Mammary epithelial cell (primary cell): ENCODE measurements at regions of chr6 and their contacts with region 1.

Region 1: DNA sequence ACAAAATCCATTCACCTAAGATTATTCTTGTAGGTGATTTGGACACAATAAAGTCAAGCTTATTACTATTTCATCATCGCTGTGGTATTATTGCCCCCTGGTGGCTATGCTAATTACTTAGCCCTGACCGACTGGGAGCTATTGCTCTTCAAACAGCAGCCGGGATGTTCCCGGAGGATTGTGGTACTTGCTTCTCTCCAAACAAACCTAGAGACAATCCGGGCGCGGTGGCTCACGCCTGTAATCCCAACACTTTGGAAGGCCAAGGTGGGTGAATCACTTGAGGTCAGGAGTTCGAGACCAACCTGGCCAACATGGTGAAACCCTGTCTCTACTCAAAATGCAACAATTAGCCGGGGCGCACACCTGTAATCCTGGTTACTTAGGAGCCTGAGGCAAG is 15.4 kb upstream of the STMND1 start:
- DNase-seq: peak; percentile 59
- H3K4me3 ChIP-seq: no peak overlapping the region
- H3K27ac ChIP-seq: no peak overlapping the region
- H3K4me1 ChIP-seq: no peaks in the 10 kb centered on the region
- H3K27me3 ChIP-seq: peaks cover 4% of the 10 kb centered on the region
- CTCF ChIP-seq: peak; percentile 54 to 71

Region 2: DNA sequence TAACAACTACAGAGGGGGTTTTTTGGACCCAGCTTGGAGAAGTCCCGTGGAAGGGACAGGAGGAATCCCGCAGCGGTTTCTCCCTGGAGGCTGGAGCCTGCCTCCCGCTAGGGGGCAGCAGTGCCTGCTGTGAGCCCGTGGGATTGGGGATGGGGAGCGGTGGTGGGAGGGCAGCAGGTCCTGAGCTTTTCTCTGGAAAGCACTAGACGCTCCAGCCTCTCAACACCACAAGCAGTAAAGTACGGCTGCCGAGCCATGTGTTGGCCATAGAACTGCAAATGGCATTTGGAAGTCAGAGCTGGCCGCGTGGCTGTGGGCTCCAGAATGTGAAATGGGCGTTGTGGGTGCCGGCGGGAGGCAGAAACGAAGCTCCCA is 800.3 kb before region 1 on chr6:
- CTCF ChIA-PET with region 1: no interaction called
- dilution Hi-C with region 1: no loop called
- in situ Hi-C with region 1: no loop called
- intact Hi-C with region 1: loop called (anchors 1 kb)
- DNase-seq: no peak
- H3K4me3 ChIP-seq: no peak overlapping the region
- H3K27ac ChIP-seq: no peak overlapping the region
- H3K4me1 ChIP-seq: no peaks in the 10 kb centered on the region
- H3K27me3 ChIP-seq: no peaks in the 10 kb centered on the region
- CTCF ChIP-seq: peak; percentile 41 to 67

Region 3: GRCh38 chr6:16514249-16514648 is 572.2 kb before region 1 on chr6:
- CTCF ChIA-PET with region 1: no interaction called
- dilution Hi-C with region 1: no loop called
- in situ Hi-C with region 1: loop called in 1 of 2 experiments (anchors 25 kb)
- intact Hi-C with region 1: no loop called
- DNase-seq: peak; percentile 18
- H3K4me3 ChIP-seq: no peak overlapping the region
- H3K27ac ChIP-seq: no peak overlapping the region
- H3K4me1 ChIP-seq: peaks cover 7% of the 10 kb centered on the region
- H3K27me3 ChIP-seq: no peaks in the 10 kb centered on the region
- CTCF ChIP-seq: peak; percentile 44 to 58

Region 4: GRCh38 chr6:16670183-16670582 is 416.3 kb before region 1 on chr6:
- CTCF ChIA-PET with region 1: no interaction called
- dilution Hi-C with region 1: no loop called
- in situ Hi-C with region 1: no loop called
- intact Hi-C with region 1: no loop called
- DNase-seq: no peak
- H3K4me3 ChIP-seq: no peak overlapping the region
- H3K27ac ChIP-seq: peak overlapping the region; percentile 71
- H3K4me1 ChIP-seq: peaks cover 23% of the 10 kb centered on the region
- H3K27me3 ChIP-seq: no peaks in the 10 kb centered on the region
- CTCF ChIP-seq: no peak

Region 5: DNA sequence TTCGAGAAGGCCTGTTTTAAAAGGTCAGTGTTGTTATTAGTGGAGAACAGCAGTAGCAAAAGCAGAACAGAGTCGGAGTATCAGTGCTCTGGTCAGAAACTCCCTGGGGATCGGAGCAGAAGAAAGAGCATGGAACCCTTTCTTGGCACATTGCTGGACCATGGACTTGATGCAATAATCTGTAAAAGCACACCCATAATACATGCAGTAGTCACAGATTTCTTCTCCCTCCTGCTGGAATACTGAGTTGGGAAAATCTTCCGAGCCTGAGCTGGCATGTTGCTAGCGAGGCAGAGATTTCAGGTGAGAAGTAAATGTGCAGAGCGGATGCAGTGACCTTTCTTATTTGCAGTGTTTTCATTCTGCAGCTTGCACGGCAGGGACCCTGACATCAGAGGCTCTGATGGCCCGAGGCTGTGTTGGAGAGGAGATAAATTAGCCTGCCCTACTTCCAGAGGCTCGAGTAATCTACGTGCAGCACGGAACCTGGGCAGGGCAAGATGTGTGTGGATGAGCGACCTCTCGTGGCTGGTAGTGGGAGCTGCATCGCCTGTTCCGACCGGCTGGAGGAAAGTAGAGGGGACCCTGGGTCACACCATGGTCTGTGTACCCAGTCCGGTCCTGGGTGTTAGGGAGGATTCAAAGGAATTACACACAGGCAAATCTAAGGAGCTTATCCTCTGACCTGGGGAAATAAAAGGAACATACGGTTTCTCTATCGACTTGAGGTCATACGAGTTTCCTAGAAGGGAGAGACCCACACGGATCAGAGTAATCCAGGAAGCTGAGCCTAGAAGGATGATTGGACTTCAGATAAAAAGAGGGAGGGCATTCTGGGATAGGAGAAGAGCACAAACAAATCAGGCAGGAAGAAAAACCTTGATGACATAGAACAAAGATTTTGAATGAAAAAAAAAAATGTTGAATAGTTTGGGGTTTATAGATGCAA is 121.6 kb before region 1 on chr6:
- CTCF ChIA-PET with region 1: no interaction called
- dilution Hi-C with region 1: no loop called
- in situ Hi-C with region 1: no loop called
- intact Hi-C with region 1: loop called (anchors 1 kb)
- DNase-seq: peak; percentile 45
- H3K4me3 ChIP-seq: no peak overlapping the region
- H3K27ac ChIP-seq: no peak overlapping the region
- H3K4me1 ChIP-seq: no peaks in the 10 kb centered on the region
- H3K27me3 ChIP-seq: peaks cover 2% of the 10 kb centered on the region
- CTCF ChIP-seq: peak; percentile 96 to 97

Region 6: DNA sequence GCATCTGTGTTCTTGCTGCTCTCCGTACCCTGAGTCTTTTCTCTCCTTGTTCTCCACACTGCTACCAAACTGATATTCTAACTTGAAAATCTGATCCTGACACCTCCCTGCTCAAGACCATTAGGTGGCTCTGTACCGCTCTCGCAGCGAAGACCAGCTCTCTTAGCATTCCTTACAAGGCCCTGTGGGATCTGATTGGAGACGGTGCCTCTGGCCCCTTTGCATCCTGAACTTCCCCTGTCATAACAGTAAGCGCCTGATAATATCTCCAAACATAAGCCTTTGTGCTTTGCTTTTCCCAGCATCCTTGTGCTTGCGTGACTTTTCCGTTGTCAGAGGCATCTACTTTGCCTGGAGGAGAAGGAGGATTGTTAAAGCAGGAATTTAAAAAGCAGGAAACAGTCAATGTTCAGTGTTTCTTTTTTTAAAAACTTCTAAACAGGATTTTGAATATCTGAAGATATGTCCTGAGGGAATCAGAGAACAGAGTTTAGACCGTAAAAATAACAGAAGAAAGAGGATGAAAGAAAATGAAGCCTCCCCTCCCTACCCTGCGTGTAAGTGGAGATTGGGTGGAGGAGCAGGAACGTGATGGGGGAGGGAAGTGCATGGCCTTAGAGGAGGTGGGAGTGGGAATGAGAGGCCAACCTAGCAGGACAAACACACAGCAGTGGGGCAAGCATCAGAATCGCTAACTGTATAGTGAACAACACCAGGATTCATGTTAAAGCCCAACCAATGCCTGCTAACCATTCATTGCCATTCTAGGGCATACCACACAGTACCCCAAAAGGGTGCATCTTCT is 73.8 kb before region 1 on chr6:
- CTCF ChIA-PET with region 1: no interaction called
- dilution Hi-C with region 1: loop called (anchors 5 kb)
- in situ Hi-C with region 1: no loop called
- intact Hi-C with region 1: loop called (anchors 1 kb)
- DNase-seq: peak; percentile 16
- H3K4me3 ChIP-seq: no peak overlapping the region
- H3K27ac ChIP-seq: no peak overlapping the region
- H3K4me1 ChIP-seq: peaks cover 11% of the 10 kb centered on the region
- H3K27me3 ChIP-seq: no peaks in the 10 kb centered on the region
- CTCF ChIP-seq: peak; percentile 3 to 26

Region 7: DNA sequence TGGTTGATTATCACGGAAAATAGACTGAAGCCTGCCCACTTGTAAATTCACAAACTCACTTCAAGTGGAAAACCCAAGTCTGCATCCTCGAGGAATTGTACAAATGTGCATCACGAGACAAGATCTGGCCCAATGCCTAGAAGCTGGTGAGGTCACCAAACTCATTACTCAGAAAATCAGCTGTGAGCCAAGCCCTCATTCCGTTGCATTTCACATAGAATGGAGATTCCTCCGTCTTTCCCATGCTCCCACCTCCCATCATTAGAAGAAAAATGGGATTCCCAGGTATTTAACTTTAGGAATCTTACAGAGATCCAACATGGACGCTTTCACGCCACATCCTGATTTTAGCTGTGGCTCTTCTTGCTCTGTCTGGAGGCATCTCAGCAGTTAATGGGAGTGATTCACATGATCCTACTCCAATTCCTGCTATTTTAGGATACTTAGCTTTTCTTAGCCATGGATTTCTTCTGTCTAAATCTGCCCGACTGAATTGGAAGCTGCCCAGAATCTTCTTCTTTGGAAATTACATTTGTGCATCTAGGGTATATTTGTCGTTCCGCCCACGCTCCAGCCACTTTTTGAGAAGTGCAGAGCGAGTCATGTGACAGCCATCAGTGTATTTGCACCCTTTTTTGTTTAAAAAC is 53.4 kb before region 1 on chr6:
- CTCF ChIA-PET with region 1: no interaction called
- dilution Hi-C with region 1: loop called (anchors 5 kb)
- in situ Hi-C with region 1: no loop called
- intact Hi-C with region 1: no loop called
- DNase-seq: peak; percentile 89
- H3K4me3 ChIP-seq: peak overlapping the region in 1 of 3 experiments; percentile 12
- H3K27ac ChIP-seq: peak overlapping the region; percentile 78
- H3K4me1 ChIP-seq: peaks cover 20% of the 10 kb centered on the region
- H3K27me3 ChIP-seq: no peaks in the 10 kb centered on the region
- CTCF ChIP-seq: no peak

Region 8: GRCh38 chr6:17057322-17057721 is 29.1 kb before region 1 on chr6:
- CTCF ChIA-PET with region 1: no interaction called
- dilution Hi-C with region 1: no loop called
- in situ Hi-C with region 1: no loop called
- intact Hi-C with region 1: loop called (anchors 5 kb)
- DNase-seq: peak; percentile 80
- H3K4me3 ChIP-seq: no peak overlapping the region
- H3K27ac ChIP-seq: peak overlapping the region; percentile 31
- H3K4me1 ChIP-seq: peaks cover 33% of the 10 kb centered on the region
- H3K27me3 ChIP-seq: no peaks in the 10 kb centered on the region
- CTCF ChIP-seq: no peak